Dendritic cell treated with granulocyte-macrophage colony-stimulating factor and Interleukin-4, amounts not matched to agents 40 ng/mL and 50 ng/mL, for 4 days (primary cell): ENCODE measurements at regions of chr7 and their contacts with region 1.

Region 1: GRCh38 chr7:123682690-123683089 is 27.0 kb downstream of the LMOD2 start:
- H3K4me3 Mint-ChIP-seq: no peak overlapping the region
- H3K27ac Mint-ChIP-seq: no peak overlapping the region
- H3K4me1 Mint-ChIP-seq: peaks cover 6% of the 10 kb centered on the region
- H3K27me3 Mint-ChIP-seq: no peaks in the 10 kb centered on the region

Region 2: DNA sequence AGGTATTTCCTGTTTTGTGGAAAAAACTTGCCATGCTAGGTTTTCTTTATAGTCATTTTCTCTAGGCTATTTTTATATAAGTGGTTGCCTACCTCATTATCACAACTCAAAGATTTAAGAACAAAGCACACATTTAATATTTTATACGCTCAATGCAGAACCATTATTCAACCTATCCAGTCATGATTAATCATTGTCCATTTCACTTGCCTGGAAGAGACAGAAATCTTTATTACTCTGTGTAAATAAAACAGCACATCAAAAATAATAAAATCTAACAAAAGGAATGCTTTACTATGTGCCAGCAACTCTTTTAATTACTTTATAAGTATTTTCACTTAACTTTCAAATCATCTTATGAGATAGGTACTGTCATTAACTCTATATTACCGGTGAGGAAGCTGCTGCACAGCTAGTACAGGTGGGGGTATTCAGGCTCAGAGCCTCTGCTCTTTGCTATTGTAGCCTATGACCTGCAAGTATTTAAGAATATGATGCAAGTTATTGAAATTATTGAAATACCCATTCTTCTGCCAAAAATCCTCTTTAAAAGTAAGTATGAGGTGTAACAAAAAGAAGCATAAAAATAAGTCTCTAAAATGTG is 670.8 kb before region 1 on chr7:
- intact Hi-C with region 1: no loop called
- H3K4me3 Mint-ChIP-seq: no peak overlapping the region
- H3K27ac Mint-ChIP-seq: no peak overlapping the region
- H3K4me1 Mint-ChIP-seq: no peaks in the 10 kb centered on the region
- H3K27me3 Mint-ChIP-seq: no peaks in the 10 kb centered on the region

Region 3: DNA sequence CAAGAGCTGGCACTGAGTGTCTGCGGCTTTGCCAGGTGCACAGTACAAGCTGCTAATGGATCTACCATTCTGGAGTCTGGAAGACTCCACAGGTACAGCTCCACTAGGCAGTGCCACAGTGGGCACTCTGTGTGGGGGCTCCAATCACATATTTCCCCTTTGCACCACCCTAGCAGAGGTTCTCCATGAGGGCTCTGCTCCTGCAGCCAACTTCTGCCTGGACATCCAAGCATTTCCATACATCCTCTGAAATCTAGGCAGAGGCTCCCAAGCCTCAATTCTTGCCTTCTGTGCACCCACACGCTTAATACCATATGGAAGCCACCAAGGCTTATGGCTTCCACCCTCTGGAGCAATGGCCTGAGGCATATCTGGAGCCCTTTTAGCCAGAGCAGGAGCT is 177.5 kb before region 1 on chr7:
- intact Hi-C with region 1: no loop called
- H3K4me3 Mint-ChIP-seq: no peak overlapping the region
- H3K27ac Mint-ChIP-seq: no peak overlapping the region
- H3K4me1 Mint-ChIP-seq: no peaks in the 10 kb centered on the region
- H3K27me3 Mint-ChIP-seq: peaks cover 1% of the 10 kb centered on the region

Region 4: DNA sequence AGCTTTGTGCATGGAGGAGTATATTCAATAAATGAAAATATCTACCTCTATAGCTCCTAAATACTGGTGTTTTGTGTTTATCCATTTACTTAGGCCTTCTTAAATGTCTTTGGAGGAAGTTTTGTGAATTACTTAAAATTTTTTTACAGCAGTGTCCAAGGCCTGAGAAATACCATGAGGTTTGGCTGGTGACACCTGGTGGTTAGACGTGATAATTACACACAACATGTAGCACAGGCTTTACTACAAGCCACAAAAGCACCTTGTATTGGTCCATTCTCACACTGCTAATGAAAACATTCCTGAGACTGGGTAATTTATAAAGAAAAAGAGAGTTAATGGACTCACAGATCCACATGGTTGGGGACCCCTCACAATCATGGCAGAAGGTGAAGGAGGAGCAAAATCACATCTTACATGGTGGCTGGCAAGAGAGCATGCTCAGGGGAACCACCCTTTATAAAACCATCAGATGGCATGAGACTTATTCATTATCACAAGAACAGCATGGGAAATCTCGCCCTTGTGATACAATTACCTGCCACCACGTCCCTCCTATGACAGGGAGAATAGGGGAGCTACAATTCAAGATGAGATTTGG is 182.9 kb after region 1 on chr7:
- intact Hi-C with region 1: loop called (anchors 2 kb)
- H3K4me3 Mint-ChIP-seq: no peak overlapping the region
- H3K27ac Mint-ChIP-seq: peak overlapping the region; percentile 30
- H3K4me1 Mint-ChIP-seq: peaks cover 32% of the 10 kb centered on the region
- H3K27me3 Mint-ChIP-seq: peaks cover 3% of the 10 kb centered on the region

Region 5: DNA sequence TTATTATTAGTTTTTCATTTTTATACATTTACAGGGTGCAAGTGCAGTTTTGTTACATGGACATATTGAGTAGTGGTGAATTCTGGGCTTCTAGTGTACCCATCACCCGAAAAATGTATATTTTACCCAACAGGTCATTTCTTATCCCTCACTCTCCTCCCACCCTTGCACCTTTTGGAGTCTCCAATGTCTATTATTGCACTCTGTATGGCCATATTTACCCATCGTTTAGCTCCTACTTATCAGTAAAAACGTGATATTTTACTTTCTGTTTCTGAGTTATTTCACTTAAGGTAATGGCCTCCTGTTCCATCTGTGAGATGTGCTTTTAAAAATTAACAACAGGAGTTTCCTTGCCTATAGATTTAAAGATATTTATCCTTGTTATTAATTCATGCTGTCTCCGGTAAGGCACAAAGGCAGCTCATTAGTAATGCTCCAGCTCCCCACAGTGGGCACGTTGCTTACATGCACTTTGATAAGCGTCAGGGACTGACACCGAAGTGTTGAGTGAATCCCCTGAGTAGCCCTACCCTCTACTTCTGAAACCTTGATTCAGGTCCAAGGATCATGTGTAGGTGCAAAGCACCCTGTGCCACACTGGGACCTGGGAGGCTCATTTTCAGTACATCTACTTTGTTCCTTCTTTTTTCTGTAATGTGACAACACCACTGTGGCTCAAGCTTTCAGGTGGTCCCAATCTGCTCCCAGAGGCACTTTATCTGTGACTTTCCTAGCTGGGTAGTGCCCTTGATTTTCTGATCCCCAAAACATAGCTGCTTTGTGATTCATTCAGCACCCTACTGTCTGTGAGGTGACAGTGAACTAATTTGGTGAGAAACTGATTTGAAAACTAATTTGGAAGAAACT is 189.5 kb after region 1 on chr7:
- intact Hi-C with region 1: loop called (anchors 2 kb)
- H3K4me3 Mint-ChIP-seq: no peak overlapping the region
- H3K27ac Mint-ChIP-seq: no peak overlapping the region
- H3K4me1 Mint-ChIP-seq: peaks cover 2% of the 10 kb centered on the region
- H3K27me3 Mint-ChIP-seq: peaks cover 10% of the 10 kb centered on the region